WTC11 (cell line): ENCODE measurements at regions of chr5 and their contacts with region 1.

Region 1: DNA sequence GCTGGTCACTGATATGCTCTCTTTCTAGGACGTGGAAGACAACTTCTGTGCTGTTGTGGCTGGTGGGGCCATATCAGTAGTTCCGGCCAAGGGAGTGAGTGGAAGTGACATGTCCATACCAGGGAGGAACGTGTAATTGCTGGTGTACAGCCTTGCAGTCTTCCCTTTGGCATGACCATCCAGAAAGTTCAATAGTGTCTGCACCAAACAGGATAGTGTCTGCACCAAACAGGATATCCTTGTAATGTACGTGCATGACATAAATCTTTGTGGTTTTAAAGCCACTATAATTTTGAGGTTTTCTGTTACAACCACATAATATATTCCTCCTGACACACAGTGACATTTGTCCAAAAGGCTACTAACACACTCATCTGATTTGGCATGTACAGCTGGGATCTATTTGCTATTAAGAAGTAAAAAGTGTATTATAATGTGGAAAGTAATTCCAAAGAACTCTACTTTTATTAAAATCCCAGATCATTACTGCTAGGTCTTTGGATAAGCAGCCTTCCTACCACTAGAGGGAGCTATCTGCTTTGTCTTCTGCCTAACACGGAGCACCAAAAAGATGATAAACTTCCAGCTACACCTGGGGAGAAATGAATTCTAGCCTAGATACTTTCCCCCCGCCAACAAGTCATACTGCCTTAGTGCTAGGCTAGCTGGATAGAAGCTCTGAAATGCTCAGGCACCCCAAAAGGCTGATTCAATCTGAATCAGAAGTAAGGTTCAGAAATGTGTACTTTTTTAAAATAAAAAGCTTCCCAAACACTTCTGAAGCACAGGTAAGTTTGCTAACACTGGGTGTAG is 52.7 kb downstream of the RNF145 start:
- DNase-seq: no peak
- ATAC-seq: peak; percentile 83
- H3K4me3 Mint-ChIP-seq: no peak overlapping the region
- H3K27ac Mint-ChIP-seq: no peak overlapping the region
- H3K4me1 Mint-ChIP-seq: peaks cover 10% of the 10 kb centered on the region
- H3K27me3 Mint-ChIP-seq: no peaks in the 10 kb centered on the region
- CTCF ChIP-seq: peak; percentile 73

Region 2: GRCh38 chr5:159209438-159210305 is 53.0 kb after region 1 on chr5 and contains the start of gene RNF145:
- CTCF ChIA-PET with region 1: interaction called, 14 read pairs
- POLR2A ChIA-PET with region 1: interaction called, 3 read pairs
- DNase-seq: peak; percentile 53
- ATAC-seq: peak; percentile 60
- H3K4me3 Mint-ChIP-seq: peak within 1 kb of the TSS; percentile 86
- H3K27ac Mint-ChIP-seq: peak within 1 kb of the TSS; percentile 73
- H3K4me1 Mint-ChIP-seq: peaks cover 48% of the 10 kb centered on the region
- H3K27me3 Mint-ChIP-seq: peaks cover 8% of the 10 kb centered on the region
- CTCF ChIP-seq: no peak
- total RNA-seq, gene RNF145: 74.9 to 76.8 TPM (median 75.7 TPM) in 3 replicates

Region 3: GRCh38 chr5:159310511-159310910 is 153.9 kb after region 1 on chr5:
- CTCF ChIA-PET with region 1: interaction called, 12 read pairs
- POLR2A ChIA-PET with region 1: no interaction called
- DNase-seq: peak; percentile 70
- ATAC-seq: peak; percentile 96
- H3K4me3 Mint-ChIP-seq: peak overlapping the region; percentile 66
- H3K27ac Mint-ChIP-seq: no peak overlapping the region
- H3K4me1 Mint-ChIP-seq: peaks cover 13% of the 10 kb centered on the region
- H3K27me3 Mint-ChIP-seq: peaks cover 33% of the 10 kb centered on the region
- CTCF ChIP-seq: no peak

Region 4: DNA sequence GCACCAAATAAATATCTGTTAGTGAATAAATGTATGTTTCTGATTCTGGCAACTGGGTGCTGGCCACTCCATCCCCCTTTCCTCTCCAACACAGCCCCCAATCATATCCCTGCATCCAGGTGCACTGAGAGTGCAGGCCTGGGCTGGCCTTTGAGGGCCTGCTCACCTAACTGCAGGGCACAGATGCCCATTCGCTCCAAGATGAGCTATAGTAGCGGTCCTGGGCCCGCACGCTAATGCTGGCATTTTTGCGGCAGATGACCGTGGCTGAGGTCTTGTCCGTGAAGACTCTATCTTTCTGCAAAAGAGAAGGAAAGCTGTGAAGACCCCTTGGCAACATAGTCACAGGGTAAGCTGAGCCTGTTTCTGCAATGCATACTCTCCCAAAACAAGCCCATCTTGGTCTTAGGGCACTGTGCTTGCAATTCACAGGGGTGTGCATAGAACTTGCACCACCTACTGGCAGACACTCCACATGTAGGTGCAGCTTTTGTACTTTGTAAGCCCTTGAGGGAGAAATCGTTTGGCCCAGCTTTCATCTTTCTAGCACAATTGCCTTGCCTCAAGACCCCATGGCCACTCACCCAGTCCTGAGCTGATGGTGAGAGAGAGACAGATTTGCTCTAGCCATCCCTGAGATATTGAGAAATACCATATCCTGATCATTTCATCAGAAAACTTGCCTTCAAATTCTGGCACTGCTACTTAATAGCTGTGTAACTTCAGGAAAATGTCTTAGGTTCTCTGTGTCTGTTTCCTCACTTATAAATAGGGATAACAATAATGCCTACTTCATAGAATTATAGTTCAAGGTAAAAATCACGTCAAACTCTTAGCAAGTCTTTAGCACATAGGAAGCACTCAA is 160.1 kb after region 1 on chr5:
- CTCF ChIA-PET with region 1: interaction called, 62 read pairs
- POLR2A ChIA-PET with region 1: no interaction called
- DNase-seq: peak; percentile 46
- ATAC-seq: peak; percentile 96
- H3K4me3 Mint-ChIP-seq: no peak overlapping the region
- H3K27ac Mint-ChIP-seq: no peak overlapping the region
- H3K4me1 Mint-ChIP-seq: no peaks in the 10 kb centered on the region
- H3K27me3 Mint-ChIP-seq: peaks cover 2% of the 10 kb centered on the region
- CTCF ChIP-seq: 0 out of 2 replicates have a peak, but pooled peaks have one; percentile 29